ENCODE measurements at regions of chr18 and their contacts with region 1.

Region 1: GRCh38 chr18:62425465-62426195 is 97.2 kb upstream of the ZCCHC2 start:
- DNase-seq: peak; percentile 34 to 90
- ATAC-seq: peak; percentile 88 to 90
- H3K4me3 ChIP-seq: peak overlapping the region; percentile 29; the same call in 2 of the 3 replicates
- H3K27ac ChIP-seq: peak overlapping the region; percentile 68 to 88
- H3K4me1 ChIP-seq: peaks cover 10% of the 10 kb centered on the region; the same call in 2 of the 3 replicates
- CTCF ChIP-seq: peak; percentile 73
- EP300 ChIP-seq: no peak
- POLR2A ChIP-seq: no peak
- RAD21 ChIP-seq: peak; percentile 80 to 81

Region 2: GRCh38 chr18:62324917-62325805 is 100.5 kb before region 1 on chr18 and contains the start of gene TNFRSF11A:
- CTCF ChIA-PET with region 1: interaction called, 14 read pairs
- POLR2A ChIA-PET with region 1: no interaction called
- DNase-seq: peak; percentile 38 to 57
- ATAC-seq: peak; percentile 89 to 90
- H3K4me3 ChIP-seq: peak within 1 kb of the TSS; percentile 70
- H3K27ac ChIP-seq: peak within 1 kb of the TSS; percentile 72 to 81
- H3K4me1 ChIP-seq: peaks cover 19% of the 10 kb centered on the region
- CTCF ChIP-seq: peak; percentile 61
- EP300 ChIP-seq: no peak
- POLR2A ChIP-seq: peak; percentile 66
- RAD21 ChIP-seq: peak; percentile 26 to 32; a peak in 3 of 5 replicates
- polyA plus RNA-seq, gene TNFRSF11A: 4.0 and 5.2 TPM in 2 replicates

Region 3: DNA sequence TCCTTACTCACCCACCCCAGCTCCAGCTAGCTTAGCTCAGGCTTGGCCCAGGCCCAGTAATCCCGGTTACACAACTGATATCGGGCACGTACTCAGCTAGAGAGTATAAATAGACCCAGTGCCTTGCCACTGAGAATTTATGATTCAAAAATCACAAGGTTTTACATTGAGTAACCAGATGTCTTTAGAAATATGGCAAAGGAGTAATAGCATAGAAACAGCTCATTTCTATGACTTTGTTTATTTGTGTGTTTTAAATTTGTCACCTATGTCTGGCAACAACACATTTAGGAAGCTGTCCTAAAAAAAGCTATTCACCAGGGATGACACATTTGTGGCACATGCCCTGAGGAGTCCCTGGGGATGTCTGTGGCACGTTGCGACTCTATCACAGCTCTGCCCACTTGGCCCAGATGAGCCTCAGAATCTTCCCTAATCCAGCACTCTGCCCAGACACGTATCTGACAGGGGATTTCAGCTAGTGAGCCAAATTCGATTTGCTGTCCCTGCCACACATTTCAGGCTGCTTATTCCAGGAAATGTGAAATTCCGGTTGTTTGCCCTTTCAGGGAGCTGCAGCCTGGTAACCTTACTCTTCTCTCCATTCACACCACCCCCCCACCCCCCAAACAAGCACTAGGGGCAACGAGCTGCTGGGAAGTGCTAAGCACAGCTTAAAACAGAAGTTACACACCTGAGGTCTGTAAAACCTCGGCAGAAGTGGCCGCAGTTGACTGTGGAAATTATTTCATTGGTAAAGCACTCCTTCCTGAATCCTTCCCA is 11.8 kb after region 1 on chr18:
- CTCF ChIA-PET with region 1: interaction called, 19 read pairs
- POLR2A ChIA-PET with region 1: interaction called, 8 read pairs
- DNase-seq: no peak
- ATAC-seq: peak; percentile 78 to 82
- H3K4me3 ChIP-seq: no peak overlapping the region
- H3K27ac ChIP-seq: peak overlapping the region; percentile 40 to 84
- H3K4me1 ChIP-seq: peaks cover 22% of the 10 kb centered on the region
- CTCF ChIP-seq: no peak
- EP300 ChIP-seq: no peak
- POLR2A ChIP-seq: no peak
- RAD21 ChIP-seq: no peak

Region 4: GRCh38 chr18:62450546-62451406 is 25.1 kb after region 1 on chr18:
- CTCF ChIA-PET with region 1: interaction called, 10 read pairs
- POLR2A ChIA-PET with region 1: interaction called, 3 read pairs
- DNase-seq: peak; percentile 74 to 82
- ATAC-seq: peak; percentile 93 to 97
- H3K4me3 ChIP-seq: no peak overlapping the region
- H3K27ac ChIP-seq: peak overlapping the region; percentile 73 to 87
- H3K4me1 ChIP-seq: peaks cover 31% of the 10 kb centered on the region
- CTCF ChIP-seq: no peak
- EP300 ChIP-seq: no peak
- POLR2A ChIP-seq: no peak
- RAD21 ChIP-seq: 0 out of 5 replicates have a peak, but pooled peaks of 1 of the 2 experiments have one; percentile 10

Region 5: GRCh38 chr18:62610701-62611411 is 185.2 kb after region 1 on chr18:
- CTCF ChIA-PET with region 1: no interaction called
- POLR2A ChIA-PET with region 1: no interaction called
- DNase-seq: no peak
- ATAC-seq: no peak
- H3K4me3 ChIP-seq: no peak overlapping the region
- H3K27ac ChIP-seq: no peak overlapping the region
- H3K4me1 ChIP-seq: no peaks in the 10 kb centered on the region
- CTCF ChIP-seq: no peak
- EP300 ChIP-seq: no peak
- POLR2A ChIP-seq: no peak
- RAD21 ChIP-seq: no peak

Measured in A549 (cell line).